ENCODE measurements at regions of chr18 and their contacts with region 1.

Region 1: DNA sequence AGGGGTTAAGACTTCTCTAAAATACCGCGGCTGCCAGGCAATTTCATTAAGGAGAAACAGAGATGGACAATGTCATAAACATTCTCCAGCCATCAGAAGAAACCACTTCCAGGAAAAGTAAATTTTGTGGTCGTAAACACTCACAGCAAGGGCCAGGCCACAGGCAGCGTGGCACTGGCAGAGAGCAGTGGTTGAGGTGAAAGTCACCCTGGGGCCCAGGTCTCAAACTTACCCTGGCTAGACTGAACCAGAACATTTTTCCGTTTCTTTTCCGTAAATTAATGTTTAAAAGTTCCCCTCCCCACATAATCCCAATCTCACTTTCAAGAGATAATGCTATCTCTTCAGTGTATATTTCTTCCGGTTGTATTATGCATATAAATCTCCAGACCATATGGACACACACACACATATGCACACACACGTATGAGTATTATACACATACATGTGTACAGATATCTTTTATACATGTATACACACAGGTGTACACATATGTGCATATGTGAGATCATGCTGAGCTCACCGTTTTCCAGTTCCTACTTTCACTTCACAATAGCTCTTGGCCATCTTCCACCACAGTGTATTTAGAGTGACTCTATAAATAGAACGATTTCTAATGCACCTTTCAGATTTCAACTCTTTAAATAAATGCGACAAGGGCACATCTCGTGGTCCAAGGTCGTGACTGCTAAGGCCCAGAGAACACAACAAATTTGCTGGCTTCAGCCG is 90.1 kb downstream of the MALT1 start:
- DNase-seq: peak in 1 of 3 donors; percentile 23
- H3K4me3 ChIP-seq: no peak overlapping the region
- H3K27ac ChIP-seq: no peak overlapping the region
- H3K4me1 ChIP-seq: peaks cover 0 to 20% (median 5%) of the 10 kb centered on the region in 4 experiments
- H3K27me3 ChIP-seq: peaks cover 2 to 11% (median 4%) of the 10 kb centered on the region in 5 experiments

Region 2: GRCh38 chr18:58520969-58521368 is 240.4 kb before region 1 on chr18:
- CTCF ChIA-PET with region 1: interaction called, 308 read pairs
- POLR2A ChIA-PET with region 1: no interaction called
- DNase-seq: peak in 1 of 3 donors; percentile 21
- H3K4me3 ChIP-seq: no peak overlapping the region
- H3K27ac ChIP-seq: no peak overlapping the region
- H3K4me1 ChIP-seq: no peaks in the 10 kb centered on the region
- H3K27me3 ChIP-seq: peaks cover 0 to 6% (median 0%) of the 10 kb centered on the region in 5 experiments

Region 3: GRCh38 chr18:58541145-58541788 is 220.1 kb before region 1 on chr18:
- CTCF ChIA-PET with region 1: interaction called, 25 read pairs
- POLR2A ChIA-PET with region 1: no interaction called
- DNase-seq: peak; percentile 34 to 47 (median 44)
- H3K4me3 ChIP-seq: no peak overlapping the region
- H3K27ac ChIP-seq: peak overlapping the region in 1 of 2 experiments; percentile 31
- H3K4me1 ChIP-seq: peaks cover 5 to 45% (median 19%) of the 10 kb centered on the region in 4 experiments
- H3K27me3 ChIP-seq: no peaks in the 10 kb centered on the region

Region 4: GRCh38 chr18:58671111-58671631 is 90.2 kb before region 1 on chr18 and contains the start of gene MALT1:
- CTCF ChIA-PET with region 1: interaction called, 29 read pairs
- POLR2A ChIA-PET with region 1: interaction called, 3 read pairs
- DNase-seq: peak; percentile 90 to 95 (median 94)
- H3K4me3 ChIP-seq: peak within 1 kb of the TSS; percentile 69 to 88 (median 74)
- H3K27ac ChIP-seq: peak within 1 kb of the TSS; percentile 50 to 70
- H3K4me1 ChIP-seq: peaks cover 10 to 33% (median 12%) of the 10 kb centered on the region in 4 experiments
- H3K27me3 ChIP-seq: no peaks in the 10 kb centered on the region

Region 5: DNA sequence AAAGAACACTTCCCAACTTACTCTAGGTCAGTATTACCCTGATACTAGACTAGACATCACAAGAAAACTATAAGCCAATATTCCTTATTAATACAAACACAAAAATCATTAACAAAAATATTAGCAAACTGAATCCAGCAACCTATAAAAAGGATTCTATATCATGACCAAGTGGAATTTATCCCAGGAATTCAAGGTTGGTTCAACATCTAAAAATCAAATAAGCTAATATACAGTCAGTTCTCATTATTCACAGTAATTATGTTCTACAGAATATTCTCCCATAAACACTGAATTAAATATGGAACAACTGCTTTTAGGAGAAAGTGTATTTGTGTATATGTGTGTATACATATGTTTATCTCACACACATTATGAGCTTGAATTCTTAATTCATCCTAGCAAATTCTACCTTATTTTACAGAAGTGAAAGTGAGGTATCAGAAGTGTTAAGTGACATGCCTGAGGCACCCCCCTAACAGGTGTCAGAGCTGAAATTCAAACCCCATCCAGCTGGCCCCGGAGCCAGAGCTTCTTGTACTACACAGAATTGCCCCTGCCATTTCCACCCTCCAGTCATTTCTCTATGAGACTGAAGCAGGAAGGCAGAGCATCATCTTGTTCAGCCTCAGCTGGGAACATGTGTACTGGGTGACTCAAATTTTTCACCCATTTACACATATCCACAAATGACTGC is 12.4 kb before region 1 on chr18:
- CTCF ChIA-PET with region 1: interaction called, 33 read pairs
- POLR2A ChIA-PET with region 1: no interaction called
- DNase-seq: peak in 1 of 3 donors; percentile 15
- H3K4me3 ChIP-seq: no peak overlapping the region
- H3K27ac ChIP-seq: no peak overlapping the region
- H3K4me1 ChIP-seq: peaks cover 0 to 8% (median 1%) of the 10 kb centered on the region in 4 experiments
- H3K27me3 ChIP-seq: no peaks in the 10 kb centered on the region